ENCODE measurements at regions of chr6 and their contacts with region 1.

Region 1: GRCh38 chr6:3157131-3157927 is at the start of gene TUBB2A:
- DNase-seq: no peak
- H3K4me3 ChIP-seq: peak within 1 kb of the TSS; percentile 78
- CTCF ChIP-seq: peak; percentile 69

Region 2: GRCh38 chr6:3209114-3210023 is 52.0 kb after region 1 on chr6:
- CTCF ChIA-PET with region 1: interaction called, 6 read pairs
- POLR2A ChIA-PET with region 1: interaction called, 18 read pairs
- DNase-seq: peak; percentile 88
- H3K4me3 ChIP-seq: peak overlapping the region; percentile 23
- CTCF ChIP-seq: peak; percentile 30

Region 3: DNA sequence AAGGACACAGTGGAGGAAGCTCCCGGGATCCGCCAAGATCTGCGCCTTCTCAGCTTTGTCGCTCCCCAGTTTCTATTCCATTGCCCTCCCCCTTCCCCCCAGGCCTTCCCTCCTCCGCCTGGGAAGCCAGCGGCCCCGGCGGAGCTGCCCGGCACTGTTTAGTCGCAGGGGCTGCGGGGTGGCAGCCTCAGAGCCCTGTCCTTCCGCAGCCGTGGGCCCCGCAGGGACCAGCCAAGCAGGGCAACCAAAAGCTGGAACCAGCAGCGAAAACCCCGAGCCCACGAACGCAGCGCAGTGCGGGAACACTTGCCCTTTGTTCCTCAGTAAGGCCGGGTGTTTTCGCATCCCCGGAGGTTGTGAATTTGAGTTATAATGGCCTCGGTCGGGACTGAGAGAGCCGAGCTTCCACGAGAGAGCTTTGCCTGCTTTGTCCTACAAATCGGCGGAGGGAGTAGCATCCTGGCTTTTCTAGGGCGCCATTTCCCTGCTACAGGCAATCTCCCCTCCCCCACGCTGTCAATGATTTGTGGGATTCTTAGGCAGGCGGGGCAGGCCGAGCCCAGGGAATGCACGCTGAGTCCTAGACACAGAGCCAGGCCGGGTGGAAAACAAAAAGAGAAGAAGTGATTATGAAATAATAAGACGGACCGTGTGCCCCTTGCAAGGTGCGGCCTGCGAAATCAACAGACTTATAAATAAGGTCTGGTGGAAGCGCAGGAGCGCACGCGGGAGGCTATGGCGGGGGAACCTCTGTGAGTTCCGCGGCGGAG is 74.1 kb after region 1 on chr6:
- CTCF ChIA-PET with region 1: interaction called, 3 read pairs
- POLR2A ChIA-PET with region 1: interaction called, 10 read pairs
- DNase-seq: no peak
- H3K4me3 ChIP-seq: peak overlapping the region; percentile 64
- CTCF ChIP-seq: no peak

Region 4: GRCh38 chr6:3258720-3259490 is 101.6 kb after region 1 on chr6 and contains the start of gene PSMG4:
- CTCF ChIA-PET with region 1: interaction called, 8 read pairs
- POLR2A ChIA-PET with region 1: interaction called, 18 read pairs
- DNase-seq: no peak
- H3K4me3 ChIP-seq: peak within 1 kb of the TSS; percentile 97
- CTCF ChIP-seq: no peak